Brain microvascular endothelial cell (primary cell): ENCODE measurements at regions of chrX and their contacts with region 1.

Region 1: DNA sequence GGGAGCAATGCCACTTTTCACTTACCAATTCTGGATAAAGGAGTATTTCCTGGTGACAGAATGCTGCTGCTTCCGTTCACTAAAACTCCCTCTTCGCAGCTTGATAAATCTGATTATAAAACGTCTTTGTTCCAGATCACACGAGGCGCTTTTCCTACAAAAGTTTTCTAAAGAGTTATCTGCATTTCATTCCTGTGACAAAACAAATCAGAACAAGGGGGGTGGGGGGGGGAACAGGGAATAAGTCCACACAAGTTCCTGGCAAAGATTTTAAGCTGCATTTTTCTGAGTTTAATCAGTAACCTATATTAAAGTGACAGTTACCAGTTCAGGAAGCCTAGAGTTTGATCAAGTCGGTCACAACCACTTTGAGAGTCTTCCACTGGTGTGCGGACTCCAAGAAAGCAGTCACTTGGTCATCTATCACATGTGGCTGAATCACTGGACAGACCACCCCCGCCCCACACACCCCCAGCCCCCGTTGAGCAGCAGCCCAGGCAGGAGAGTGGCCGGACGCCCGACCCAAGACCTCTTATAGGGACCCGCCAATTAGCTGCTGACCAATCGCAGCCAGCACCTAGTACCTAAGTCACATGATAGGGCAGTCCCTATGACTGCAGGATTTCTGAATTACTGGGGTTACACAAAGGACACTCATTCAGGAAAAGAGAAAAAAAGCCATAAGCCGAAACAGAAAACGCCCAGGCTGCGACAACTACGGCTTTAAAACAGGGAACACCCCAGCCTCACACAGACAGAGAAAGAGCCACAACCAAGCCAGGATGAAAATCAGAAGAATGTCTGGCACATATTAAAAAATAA is 569.3 kb upstream of the DIPK2B start:
- DNase-seq: peak; percentile 90
- H3K4me3 ChIP-seq: peak overlapping the region; percentile 70
- H3K27ac ChIP-seq: peak overlapping the region; percentile 91
- H3K27me3 ChIP-seq: no peaks in the 10 kb centered on the region
- CTCF ChIP-seq: no peak

Region 2: DNA sequence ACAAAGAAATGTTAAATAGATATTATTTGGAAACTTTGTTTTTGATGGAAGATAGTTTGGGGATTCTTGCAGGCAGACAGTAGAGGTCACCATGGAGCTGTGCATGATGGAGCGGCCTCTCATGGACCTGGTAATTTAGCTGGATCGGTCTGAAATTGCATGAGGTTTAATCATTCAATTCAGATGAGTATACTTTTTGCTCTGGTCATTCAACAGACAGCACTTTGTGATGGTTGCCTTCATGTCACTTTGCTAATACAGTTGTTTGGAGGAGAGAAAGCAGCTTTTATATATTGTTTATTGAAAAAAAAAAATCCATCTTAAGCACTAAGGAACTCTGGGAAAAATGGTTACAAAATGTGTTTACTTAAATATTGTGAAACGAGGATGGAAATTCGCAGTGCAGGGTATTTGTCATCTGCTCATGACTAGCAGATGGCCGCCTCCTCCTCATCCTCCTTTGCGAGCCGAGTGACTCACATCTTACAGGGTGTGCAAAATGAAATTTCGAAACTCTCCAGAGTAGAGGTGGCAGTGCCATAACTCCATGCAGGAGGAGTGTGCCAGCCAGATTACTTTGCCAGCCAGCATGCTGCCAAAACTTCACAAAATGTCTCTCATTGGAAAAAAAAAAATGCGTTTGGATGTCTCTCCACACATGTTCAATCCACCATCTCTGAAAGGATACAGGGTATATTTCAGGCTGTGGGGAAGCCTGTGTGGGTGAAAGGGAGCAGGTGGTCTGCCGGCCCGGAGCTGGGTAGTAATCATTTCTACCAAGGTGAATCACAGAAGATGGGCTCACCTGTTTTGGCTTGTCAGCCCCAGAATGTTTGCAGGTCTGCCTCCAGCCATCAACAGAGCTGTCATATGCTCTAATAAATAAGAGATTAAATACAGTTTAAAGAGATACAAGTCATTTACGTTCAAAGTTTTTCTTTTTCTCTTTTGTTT is 254.4 kb before region 1 on chrX:
- in situ Hi-C with region 1: loop called (anchors 25 kb)
- DNase-seq: peak; percentile 76
- H3K4me3 ChIP-seq: no peak overlapping the region
- H3K27ac ChIP-seq: peak overlapping the region; percentile 59
- H3K27me3 ChIP-seq: no peaks in the 10 kb centered on the region
- CTCF ChIP-seq: peak; percentile 79